ENCODE measurements at regions of chr3 and their contacts with region 1.

Region 1: GRCh38 chr3:185362850-185363661 is at the start of gene MAP3K13:
- DNase-seq: peak; percentile 94
- H3K4me3 Mint-ChIP-seq: peak within 1 kb of the TSS; percentile 83
- H3K27ac Mint-ChIP-seq: peak within 1 kb of the TSS; percentile 80
- H3K4me1 Mint-ChIP-seq: peaks cover 13% of the 10 kb centered on the region
- H3K27me3 Mint-ChIP-seq: no peaks in the 10 kb centered on the region
- CTCF ChIP-seq: no peak
- total RNA-seq, gene MAP3K13: 15.8 and 23.7 TPM in 2 replicates

Region 2: DNA sequence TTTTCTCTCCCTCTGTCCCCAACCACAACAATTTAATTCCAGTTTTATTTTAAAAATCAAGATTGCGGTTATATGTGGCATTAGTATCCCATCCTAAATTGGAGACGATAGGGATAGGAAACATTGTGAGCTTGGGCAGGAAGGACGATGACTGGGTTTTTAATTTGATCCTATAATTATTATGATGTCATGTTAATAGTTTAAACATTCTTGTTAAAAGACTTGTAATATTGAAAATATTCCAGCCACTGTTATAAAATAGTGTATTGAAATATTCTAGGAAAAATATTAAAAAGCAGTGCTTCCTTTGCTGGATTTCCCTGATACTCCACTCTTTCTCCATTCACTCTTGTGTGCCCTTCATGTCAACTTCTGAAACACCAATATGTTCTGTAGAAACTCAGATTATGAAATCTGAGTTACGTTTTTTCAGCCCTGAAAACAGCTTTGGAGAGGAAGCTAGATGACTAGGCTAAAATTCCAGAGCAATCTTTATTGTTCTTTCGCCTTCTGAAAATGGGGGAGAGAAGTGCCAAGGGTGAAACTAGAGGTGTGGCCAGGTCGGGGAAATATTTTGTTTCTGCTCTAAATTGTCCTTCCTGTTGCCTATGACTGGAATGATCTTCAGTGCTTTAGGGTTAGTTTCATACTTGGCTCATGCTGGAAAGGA is 46.2 kb before region 1 on chr3:
- CTCF ChIA-PET with region 1: no interaction called
- POLR2A ChIA-PET with region 1: interaction called, 11 read pairs
- intact Hi-C with region 1: no loop called
- DNase-seq: peak; percentile 88
- H3K4me3 Mint-ChIP-seq: peak overlapping the region; percentile 65
- H3K27ac Mint-ChIP-seq: peak overlapping the region; percentile 96
- H3K4me1 Mint-ChIP-seq: peaks cover 17% of the 10 kb centered on the region
- H3K27me3 Mint-ChIP-seq: no peaks in the 10 kb centered on the region
- CTCF ChIP-seq: no peak

Region 3: GRCh38 chr3:185488465-185488864 is 125.4 kb after region 1 on chr3:
- CTCF ChIA-PET with region 1: no interaction called
- POLR2A ChIA-PET with region 1: no interaction called
- intact Hi-C with region 1: no loop called
- DNase-seq: no peak
- H3K4me3 Mint-ChIP-seq: no peak overlapping the region
- H3K27ac Mint-ChIP-seq: no peak overlapping the region
- H3K4me1 Mint-ChIP-seq: peaks cover 5% of the 10 kb centered on the region
- H3K27me3 Mint-ChIP-seq: no peaks in the 10 kb centered on the region
- CTCF ChIP-seq: no peak